ENCODE measurements at regions of chr17 and their contacts with region 1.

Region 1: GRCh38 chr17:39461113-39461925 is at the start of gene CDK12:
- DNase-seq: peak; percentile 89 to 99 (median 94)
- ATAC-seq: peak; percentile 84
- H3K4me3 ChIP-seq: peak within 1 kb of the TSS; percentile 88
- H3K4me3 Mint-ChIP-seq: peak within 1 kb of the TSS; percentile 94
- H3K27ac ChIP-seq: peak within 1 kb of the TSS; percentile 95 to 96
- H3K27ac Mint-ChIP-seq: peak within 1 kb of the TSS; percentile 91
- H3K4me1 ChIP-seq: peaks cover 38% of the 10 kb centered on the region
- H3K4me1 Mint-ChIP-seq: peaks cover 43% of the 10 kb centered on the region
- H3K27me3 ChIP-seq: no peaks in the 10 kb centered on the region
- H3K27me3 Mint-ChIP-seq: no peaks in the 10 kb centered on the region
- CTCF ChIP-seq: no peak
- total RNA-seq, gene CDK12: 99.6 to 108 TPM

Region 2: DNA sequence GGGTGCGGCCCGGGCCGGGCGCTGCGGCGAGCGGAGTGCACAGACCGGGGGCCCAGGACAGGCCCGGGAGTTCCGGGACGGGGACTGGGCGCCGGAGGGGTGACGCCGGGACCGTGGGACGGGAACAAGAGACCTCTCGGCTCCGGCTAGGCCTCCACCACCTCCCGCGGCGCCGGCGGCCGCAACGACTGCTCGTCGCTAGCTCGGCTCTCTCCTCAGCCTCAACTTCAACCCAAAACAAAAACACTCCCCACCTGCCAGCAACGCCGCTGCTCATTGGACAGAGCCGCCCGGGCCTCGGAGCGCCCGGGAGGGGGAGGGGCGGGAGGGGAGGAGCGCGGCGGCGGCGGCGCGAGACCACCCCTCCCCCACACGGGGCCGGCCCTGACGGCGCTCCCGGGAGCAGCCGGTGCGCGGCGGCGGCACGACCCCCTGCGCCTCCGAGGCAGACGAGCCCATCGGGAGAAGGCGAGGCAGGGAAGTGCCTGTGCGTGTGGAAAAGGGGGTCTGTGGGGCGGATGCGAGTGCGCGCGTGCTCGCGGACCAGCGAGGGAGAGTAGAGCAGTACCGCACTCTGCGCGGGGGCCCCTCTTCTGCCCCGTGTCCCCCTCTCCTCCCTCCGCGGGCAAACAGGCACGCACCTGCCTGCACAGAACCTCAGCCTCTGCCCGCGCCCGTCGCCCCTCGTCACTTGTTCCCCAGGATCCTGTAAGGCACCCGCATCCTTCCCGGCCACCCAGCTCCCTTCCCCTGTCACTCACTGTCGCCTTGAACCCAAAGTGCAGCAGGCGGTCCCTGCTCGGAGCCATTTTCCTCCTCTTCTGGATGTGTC is 59.7 kb before region 1 on chr17 and contains the start of gene FBXL20:
- CTCF ChIA-PET with region 1: no interaction called
- POLR2A ChIA-PET with region 1: interaction called, 32 read pairs
- intact Hi-C with region 1: loop called in 1 of 2 experiments (anchors 2 kb)
- DNase-seq: peak; percentile 89 to 96 (median 94)
- ATAC-seq: peak; percentile 77
- H3K4me3 ChIP-seq: peak within 1 kb of the TSS; percentile 97
- H3K4me3 Mint-ChIP-seq: peak within 1 kb of the TSS; percentile 100
- H3K27ac ChIP-seq: peak within 1 kb of the TSS; percentile 68 to 72
- H3K27ac Mint-ChIP-seq: peak within 1 kb of the TSS; percentile 98
- H3K4me1 ChIP-seq: peaks cover 13% of the 10 kb centered on the region
- H3K4me1 Mint-ChIP-seq: peaks cover 40% of the 10 kb centered on the region
- H3K27me3 ChIP-seq: no peaks in the 10 kb centered on the region
- H3K27me3 Mint-ChIP-seq: no peaks in the 10 kb centered on the region
- CTCF ChIP-seq: no peak
- total RNA-seq, gene FBXL20: 16.7 to 17.1 TPM

Region 3: DNA sequence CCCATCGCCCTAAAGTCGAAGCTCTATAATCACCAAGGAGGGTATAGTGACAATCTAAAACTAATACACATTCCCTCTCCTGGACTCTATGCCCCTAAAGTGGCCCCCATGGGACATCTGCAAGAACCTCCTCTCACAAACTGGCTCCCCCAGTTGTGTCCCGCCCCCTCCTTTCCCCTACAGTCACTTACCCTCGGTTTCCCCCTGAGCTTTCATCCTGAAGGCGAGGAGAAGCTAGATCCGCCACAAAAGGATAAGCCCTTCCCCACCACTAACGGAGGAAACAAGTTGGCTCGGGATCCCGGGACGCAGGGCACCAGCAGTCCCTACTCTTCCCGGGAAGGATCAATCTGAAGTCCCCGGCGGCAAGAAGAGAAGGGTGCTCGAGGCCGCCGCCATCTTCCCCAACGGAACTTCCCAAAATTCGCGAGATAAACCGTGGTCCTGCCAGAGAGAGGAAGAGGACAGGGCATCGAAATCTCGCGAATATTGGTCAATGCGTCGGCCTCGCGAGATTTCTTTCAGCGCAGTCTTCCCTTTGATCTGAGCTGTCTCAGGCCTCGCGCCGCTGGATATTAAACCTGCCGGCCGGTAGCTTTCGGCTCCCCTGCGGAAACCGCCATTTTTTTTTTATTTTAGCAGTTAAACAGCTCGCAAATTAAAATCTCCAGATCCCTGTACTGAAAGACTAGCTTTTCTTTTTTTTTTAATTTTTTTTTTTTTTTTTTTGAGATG is 10.3 kb before region 1 on chr17 and contains the start of gene MED1:
- CTCF ChIA-PET with region 1: interaction called, 6 read pairs
- POLR2A ChIA-PET with region 1: interaction called, 204 read pairs
- intact Hi-C with region 1: loop called (anchors 1 kb)
- DNase-seq: peak; percentile 80 to 98 (median 86)
- ATAC-seq: peak; percentile 92
- H3K4me3 ChIP-seq: peak within 1 kb of the TSS; percentile 75
- H3K4me3 Mint-ChIP-seq: peak within 1 kb of the TSS; percentile 99
- H3K27ac ChIP-seq: peak within 1 kb of the TSS; percentile 80 to 82
- H3K27ac Mint-ChIP-seq: peak within 1 kb of the TSS; percentile 99
- H3K4me1 ChIP-seq: peaks cover 22% of the 10 kb centered on the region
- H3K4me1 Mint-ChIP-seq: peaks cover 29% of the 10 kb centered on the region
- H3K27me3 ChIP-seq: no peaks in the 10 kb centered on the region
- H3K27me3 Mint-ChIP-seq: no peaks in the 10 kb centered on the region
- CTCF ChIP-seq: no peak
- total RNA-seq, gene MED1: 24.7 to 28.7 TPM

Measured in CD4-positive, alpha-beta T cell (primary cell).